Endothelial cell of umbilical vein (primary cell): ENCODE measurements at regions of chr17 and their contacts with region 1.

Region 1: DNA sequence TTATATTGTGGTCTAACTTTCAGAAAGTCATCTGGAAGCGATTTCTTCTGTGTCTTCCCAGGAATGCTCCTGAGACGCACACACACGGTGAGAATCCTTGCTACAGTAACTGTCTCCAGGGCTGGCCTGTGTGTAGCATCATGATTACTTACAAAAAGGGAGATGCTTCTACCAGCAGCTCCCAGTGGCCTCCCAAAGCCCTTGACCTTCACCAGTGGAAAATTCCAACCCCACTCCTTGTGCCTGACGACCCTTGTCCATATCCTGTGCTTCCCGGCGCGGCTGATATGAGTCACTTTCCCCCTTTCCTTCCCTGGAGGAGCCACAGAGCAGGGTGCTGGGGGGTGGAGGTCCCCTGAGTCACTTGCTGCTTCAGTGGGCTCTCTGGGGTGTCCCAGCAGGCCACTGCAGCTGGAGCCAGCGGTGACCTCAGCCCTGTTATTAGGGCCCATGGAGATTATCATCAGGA is 22.1 kb upstream of the NAT9 start:
- DNase-seq: peak; percentile 83
- H3K4me3 ChIP-seq: no peak overlapping the region
- H3K27ac ChIP-seq: peak overlapping the region; percentile 21
- H3K4me1 ChIP-seq: peaks cover 24% of the 10 kb centered on the region
- H3K27me3 ChIP-seq: no peaks in the 10 kb centered on the region
- CTCF ChIP-seq: no peak
- POLR2A ChIP-seq: no peak

Region 2: GRCh38 chr17:74825952-74826719 is 27.9 kb after region 1 on chr17:
- CTCF ChIA-PET with region 1: interaction called, 6 read pairs
- POLR2A ChIA-PET with region 1: no interaction called
- dilution Hi-C with region 1: no loop called
- intact Hi-C with region 1: loop called (anchors 2 kb)
- DNase-seq: peak; percentile 77
- H3K4me3 ChIP-seq: no peak overlapping the region
- H3K27ac ChIP-seq: no peak overlapping the region
- H3K4me1 ChIP-seq: peaks cover 13% of the 10 kb centered on the region
- H3K27me3 ChIP-seq: no peaks in the 10 kb centered on the region
- CTCF ChIP-seq: no peak
- POLR2A ChIP-seq: no peak